Activated T-helper 1 cell treated with anti-CD3 and anti-CD28 coated beads, Interleukin-12 subunit alpha, Interleukin-12 subunit beta, Interleukin-2, Interleukin-4 antibody, amounts not matched to agents 30 ng/mL and 10 ng/mL and 1 ng/mL, durations not matched to agents 14 hours and 24 hours and 36 hours (primary cell): ENCODE measurements at regions of chr3 and their contacts with region 1.

Region 1: GRCh38 chr3:194682694-194683310 is 2.9 kb upstream of the FAM43A start:
- DNase-seq: peak; percentile 58
- H3K4me3 Mint-ChIP-seq: no peak overlapping the region
- H3K27ac Mint-ChIP-seq: no peak overlapping the region
- H3K4me1 Mint-ChIP-seq: peaks cover 42% of the 10 kb centered on the region
- H3K27me3 Mint-ChIP-seq: peaks cover 20% of the 10 kb centered on the region

Region 2: GRCh38 chr3:194671900-194672808 is 10.6 kb before region 1 on chr3 and contains the start of gene LSG1:
- intact Hi-C with region 1: loop called (anchors 1 kb)
- DNase-seq: peak; percentile 84
- H3K4me3 Mint-ChIP-seq: peak within 1 kb of the TSS; percentile 99
- H3K27ac Mint-ChIP-seq: peak within 1 kb of the TSS; percentile 97
- H3K4me1 Mint-ChIP-seq: peaks cover 68% of the 10 kb centered on the region
- H3K27me3 Mint-ChIP-seq: peaks cover 3% of the 10 kb centered on the region
- total RNA-seq, gene LSG1: 65.1 and 66.3 TPM in 2 replicates

Region 3: DNA sequence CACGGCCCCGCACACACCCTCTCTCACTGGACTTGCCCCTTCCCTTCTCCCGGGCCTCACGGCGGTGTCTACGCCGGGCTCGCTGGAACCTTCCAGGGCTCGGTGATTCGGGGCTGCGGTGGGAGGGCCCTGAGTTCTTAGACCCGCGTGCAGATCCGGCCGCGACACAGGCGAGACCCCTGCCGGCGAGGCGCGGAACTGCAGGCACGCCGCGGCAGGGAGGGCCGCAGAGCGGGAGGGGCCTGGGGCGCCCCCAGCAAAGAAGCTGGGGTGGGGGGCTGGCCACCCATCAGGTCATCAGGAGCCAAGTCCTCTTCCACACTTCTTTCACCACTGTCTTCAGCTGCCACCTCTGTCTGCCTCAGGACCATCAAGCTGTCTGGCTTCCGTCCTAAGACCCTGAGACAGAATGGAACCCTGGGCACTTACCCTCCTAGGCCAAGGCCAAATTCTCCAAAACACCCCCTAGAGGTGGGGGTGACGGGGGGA is 423.7 kb after region 1 on chr3:
- intact Hi-C with region 1: loop called (anchors 1 kb)
- DNase-seq: peak; percentile 47
- H3K4me3 Mint-ChIP-seq: no peak overlapping the region
- H3K27ac Mint-ChIP-seq: no peak overlapping the region
- H3K4me1 Mint-ChIP-seq: peaks cover 9% of the 10 kb centered on the region
- H3K27me3 Mint-ChIP-seq: no peaks in the 10 kb centered on the region

Region 4: GRCh38 chr3:195147649-195148095 is 464.9 kb after region 1 on chr3:
- intact Hi-C with region 1: loop called (anchors 5 kb)
- DNase-seq: peak; percentile 55
- H3K4me3 Mint-ChIP-seq: peak overlapping the region; percentile 82
- H3K27ac Mint-ChIP-seq: peak overlapping the region; percentile 22
- H3K4me1 Mint-ChIP-seq: peaks cover 43% of the 10 kb centered on the region
- H3K27me3 Mint-ChIP-seq: peaks cover 6% of the 10 kb centered on the region

Region 5: DNA sequence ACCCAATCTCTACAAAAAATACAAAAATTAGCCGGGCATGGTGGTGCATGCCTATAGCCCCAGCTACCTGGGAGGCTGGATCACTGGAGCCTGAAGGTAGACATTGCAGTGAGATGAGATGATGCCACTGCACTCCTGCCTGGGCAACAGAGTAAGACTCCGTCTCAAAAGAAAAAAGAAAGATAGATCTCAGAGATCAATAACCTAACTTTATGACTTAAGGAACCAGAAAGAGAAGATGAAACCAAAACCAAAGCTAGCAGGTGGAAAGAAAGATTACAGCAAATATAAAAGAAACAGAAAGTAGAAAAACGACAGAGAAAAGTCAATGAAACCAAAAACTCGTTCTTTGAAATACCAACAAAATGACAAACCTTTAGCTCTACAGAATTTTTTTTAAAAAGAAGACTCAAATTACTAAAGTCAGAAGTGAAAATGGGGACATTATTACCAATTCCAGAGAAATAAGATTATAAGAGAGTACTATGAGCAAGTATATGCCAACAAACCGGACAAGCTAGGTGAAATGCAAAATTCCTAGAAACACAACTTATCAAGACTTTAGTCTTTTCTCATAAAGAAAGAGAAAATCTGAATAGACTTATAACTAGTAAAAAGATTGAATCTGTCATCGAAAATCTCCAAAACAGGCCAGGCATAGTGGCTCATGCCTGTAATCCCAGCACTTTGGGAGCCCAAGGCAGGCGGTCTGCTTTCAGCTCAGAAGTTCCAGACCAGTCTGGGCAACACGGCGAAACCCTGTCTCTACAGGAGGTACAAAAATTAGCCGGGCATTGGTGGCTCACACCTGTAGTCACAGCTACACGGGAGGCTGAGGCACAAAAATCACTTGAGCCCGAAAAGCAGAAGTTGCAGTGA is 725.0 kb after region 1 on chr3:
- intact Hi-C with region 1: loop called (anchors 5 kb)
- DNase-seq: no peak
- H3K4me3 Mint-ChIP-seq: peak overlapping the region; percentile 68
- H3K27ac Mint-ChIP-seq: peak overlapping the region; percentile 69
- H3K4me1 Mint-ChIP-seq: peaks cover 40% of the 10 kb centered on the region
- H3K27me3 Mint-ChIP-seq: peaks cover 5% of the 10 kb centered on the region

Region 6: GRCh38 chr3:195522254-195523023 is 839.6 kb after region 1 on chr3:
- intact Hi-C with region 1: loop called (anchors 1 kb)
- DNase-seq: no peak
- H3K4me3 Mint-ChIP-seq: no peak overlapping the region
- H3K27ac Mint-ChIP-seq: no peak overlapping the region
- H3K4me1 Mint-ChIP-seq: peaks cover 35% of the 10 kb centered on the region
- H3K27me3 Mint-ChIP-seq: no peaks in the 10 kb centered on the region